Calu3 (cell line): ENCODE measurements at regions of chr9 and their contacts with region 1.

Region 1: GRCh38 chr9:89278997-89279739 is 31.8 kb upstream of the CKS2 start:
- DNase-seq: peak; percentile 12
- H3K4me3 Mint-ChIP-seq: no peak overlapping the region
- H3K27ac Mint-ChIP-seq: no peak overlapping the region
- H3K4me1 Mint-ChIP-seq: no peaks in the 10 kb centered on the region
- H3K27me3 Mint-ChIP-seq: no peaks in the 10 kb centered on the region
- CTCF ChIP-seq: peak; percentile 20

Region 2: GRCh38 chr9:88593537-88594185 is 685.5 kb before region 1 on chr9:
- CTCF ChIA-PET with region 1: no interaction called
- intact Hi-C with region 1: loop called (anchors 5 kb)
- DNase-seq: peak; percentile 53
- H3K4me3 Mint-ChIP-seq: no peak overlapping the region
- H3K27ac Mint-ChIP-seq: no peak overlapping the region
- H3K4me1 Mint-ChIP-seq: no peaks in the 10 kb centered on the region
- H3K27me3 Mint-ChIP-seq: peaks cover 25% of the 10 kb centered on the region
- CTCF ChIP-seq: peak; percentile 28